ENCODE measurements at regions of chr17 and their contacts with region 1.

Region 1: DNA sequence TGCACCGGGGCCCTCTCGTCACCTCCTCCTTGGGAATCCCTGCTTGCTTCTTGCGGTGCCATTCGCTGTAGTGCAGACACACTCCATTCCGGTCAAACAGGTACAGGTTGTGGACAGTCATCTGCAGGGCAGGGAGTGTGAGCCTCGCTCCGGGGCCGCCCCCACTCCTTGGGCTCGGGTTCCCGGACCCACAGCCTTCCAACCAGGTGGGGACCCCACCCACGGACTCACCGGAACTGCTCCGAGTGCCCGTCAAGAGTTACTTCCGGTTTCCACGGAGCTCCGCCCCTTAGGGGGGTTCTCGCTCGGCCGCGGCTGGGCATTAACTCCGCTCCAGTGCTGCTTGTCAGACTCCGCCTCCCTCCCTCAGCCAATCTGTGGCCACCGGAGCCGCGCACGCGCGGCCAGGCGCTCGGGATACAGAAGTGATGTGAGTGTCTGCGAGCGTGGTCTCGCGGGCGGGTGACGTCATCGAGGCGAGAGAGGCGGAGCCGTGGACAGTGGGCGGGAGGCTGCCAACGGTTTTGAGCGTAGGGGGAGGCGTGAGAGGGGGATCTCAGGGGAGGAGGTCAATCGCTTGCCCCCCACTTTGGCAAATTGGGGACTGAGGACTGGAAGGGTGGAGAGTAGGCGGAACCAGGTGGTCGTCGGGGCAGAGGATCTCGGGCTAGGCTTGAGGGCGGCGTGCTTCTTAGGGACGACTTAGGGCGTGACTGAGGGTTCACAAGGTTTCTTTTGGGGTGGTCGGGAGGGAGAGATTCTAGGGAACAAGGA is at the starts of genes CNTROB and TRAPPC1:
- DNase-seq: peak; percentile 98
- ATAC-seq: peak; percentile 90
- H3K4me3 Mint-ChIP-seq: peak within 1 kb of the TSS; percentile 100
- H3K27ac Mint-ChIP-seq: peak within 1 kb of the TSS; percentile 97
- H3K4me1 Mint-ChIP-seq: peaks cover 32% of the 10 kb centered on the region
- H3K27me3 Mint-ChIP-seq: peaks cover 37% of the 10 kb centered on the region
- CTCF ChIP-seq: no peak
- total RNA-seq, gene CNTROB: 37.0 to 39.7 TPM (median 38.5 TPM) in 3 replicates
- total RNA-seq, gene TRAPPC1: 99.7 to 135 TPM (median 125 TPM) in 3 replicates

Region 2: GRCh38 chr17:7850701-7851437 is 81.0 kb before region 1 on chr17:
- CTCF ChIA-PET with region 1: no interaction called
- POLR2A ChIA-PET with region 1: no interaction called
- DNase-seq: no peak
- ATAC-seq: no peak
- H3K4me3 Mint-ChIP-seq: peak overlapping the region; percentile 81
- H3K27ac Mint-ChIP-seq: no peak overlapping the region
- H3K4me1 Mint-ChIP-seq: peaks cover 30% of the 10 kb centered on the region
- H3K27me3 Mint-ChIP-seq: peaks cover 30% of the 10 kb centered on the region
- CTCF ChIP-seq: no peak

Region 3: DNA sequence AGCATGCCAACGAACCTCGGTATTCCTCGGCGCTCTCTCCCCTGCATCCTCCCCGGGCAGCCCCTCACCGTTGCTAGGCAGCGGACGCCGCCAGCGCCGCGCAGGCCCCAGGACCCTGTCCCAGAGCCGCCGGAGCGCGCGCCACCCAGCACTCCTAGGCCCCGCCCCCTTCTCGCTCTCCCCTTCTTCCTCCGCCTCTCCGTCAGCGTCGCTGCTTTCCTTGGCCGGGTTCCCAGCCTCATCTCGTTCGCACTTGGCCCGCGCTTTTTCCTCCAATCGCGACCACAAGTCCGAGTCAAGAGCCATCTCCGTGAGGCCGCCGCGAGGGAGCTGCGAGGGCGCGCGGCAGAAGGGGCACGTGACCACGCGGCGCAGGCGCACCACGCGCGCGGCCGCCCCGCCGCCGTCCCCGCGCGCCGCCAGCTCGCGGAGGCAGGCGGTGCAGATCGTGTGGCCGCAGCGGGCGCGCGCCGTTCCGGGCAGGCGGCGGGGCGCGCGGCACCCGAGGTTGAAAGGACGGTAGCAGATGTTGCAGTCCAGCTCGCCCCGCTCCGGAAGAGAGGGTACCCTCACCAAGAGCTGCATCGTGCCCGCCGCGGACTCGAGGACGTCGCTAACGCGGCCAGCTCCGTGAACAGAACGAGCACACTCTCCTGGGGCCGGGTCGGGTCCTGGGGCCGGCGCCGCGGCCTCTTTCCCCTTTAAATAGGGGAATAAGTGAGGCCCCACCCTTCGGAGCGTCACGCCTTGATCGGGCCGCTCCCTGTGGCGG is 16.1 kb before region 1 on chr17 and contains the start of gene RNF227:
- CTCF ChIA-PET with region 1: interaction called, 15 read pairs
- POLR2A ChIA-PET with region 1: interaction called, 4 read pairs
- DNase-seq: peak; percentile 90
- ATAC-seq: peak; percentile 94
- H3K4me3 Mint-ChIP-seq: peak within 1 kb of the TSS; percentile 72
- H3K27ac Mint-ChIP-seq: no peak within 1 kb of the TSS
- H3K4me1 Mint-ChIP-seq: peaks cover 13% of the 10 kb centered on the region
- H3K27me3 Mint-ChIP-seq: peaks cover 70% of the 10 kb centered on the region
- CTCF ChIP-seq: no peak
- total RNA-seq, gene RNF227: 0.83 to 1.8 TPM (median 0.94 TPM) in 3 replicates

Region 4: DNA sequence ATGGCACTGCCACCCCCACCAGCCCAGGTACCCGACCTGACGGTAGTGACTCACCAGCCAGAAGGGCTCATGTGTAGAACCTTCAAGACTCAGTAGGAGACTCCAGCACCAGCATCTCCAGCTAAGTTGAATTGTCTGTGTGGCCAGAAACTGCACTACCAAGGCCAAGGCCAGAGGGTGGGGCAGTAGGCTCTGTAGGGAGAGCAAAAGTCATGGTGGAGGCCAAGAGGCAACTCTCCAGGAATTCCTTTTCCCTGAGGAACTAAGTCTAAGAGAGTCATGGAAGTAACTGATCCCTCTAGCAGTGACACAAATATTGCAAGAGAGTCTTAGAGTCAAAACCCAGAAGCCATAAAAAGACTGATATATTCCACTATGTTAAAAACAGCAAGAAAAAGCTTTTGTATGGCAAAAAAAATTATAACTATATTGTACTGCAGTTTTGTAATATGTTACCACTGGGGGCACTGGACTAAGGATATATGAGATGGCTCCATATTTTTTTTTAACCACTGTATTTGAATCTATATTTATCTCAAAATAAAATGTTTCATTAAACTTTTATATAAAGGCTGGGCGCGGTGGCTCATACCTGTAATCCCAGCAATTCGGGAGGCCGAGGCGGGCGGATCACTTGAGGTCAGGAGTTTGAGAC is 40.4 kb after region 1 on chr17:
- CTCF ChIA-PET with region 1: interaction called, 10 read pairs
- POLR2A ChIA-PET with region 1: interaction called, 3 read pairs
- DNase-seq: no peak
- ATAC-seq: no peak
- H3K4me3 Mint-ChIP-seq: no peak overlapping the region
- H3K27ac Mint-ChIP-seq: no peak overlapping the region
- H3K4me1 Mint-ChIP-seq: no peaks in the 10 kb centered on the region
- H3K27me3 Mint-ChIP-seq: peaks cover 28% of the 10 kb centered on the region
- CTCF ChIP-seq: no peak